Heart right ventricle (tissue), 16 donors: ENCODE measurements at regions of chr9 and their contacts with region 1.

Region 1: GRCh38 chr9:28970241-28970654 is 1397.0 kb upstream of the C9orf72 start:
- DNase-seq: no peak
- ATAC-seq: no peak
- H3K4me3 ChIP-seq: no peak overlapping the region
- H3K27ac ChIP-seq: no peak overlapping the region
- H3K4me1 ChIP-seq: no peaks in the 10 kb centered on the region
- H3K27me3 ChIP-seq: no peaks in the 10 kb centered on the region
- CTCF ChIP-seq: no peak

Region 2: GRCh38 chr9:28762167-28762566 is 208.1 kb before region 1 on chr9:
- intact Hi-C with region 1: no loop called
- DNase-seq: no peak
- ATAC-seq: no peak
- H3K4me3 ChIP-seq: no peak overlapping the region
- H3K27ac ChIP-seq: no peak overlapping the region
- H3K4me1 ChIP-seq: no peaks in the 10 kb centered on the region
- H3K27me3 ChIP-seq: no peaks in the 10 kb centered on the region
- CTCF ChIP-seq: no peak

Region 3: GRCh38 chr9:28915256-28915930 is 54.9 kb before region 1 on chr9:
- intact Hi-C with region 1: loop called in 1 of 10 experiments (anchors 10 kb)
- DNase-seq: no peak
- ATAC-seq: no peak
- H3K4me3 ChIP-seq: no peak overlapping the region
- H3K27ac ChIP-seq: no peak overlapping the region
- H3K4me1 ChIP-seq: no peaks in the 10 kb centered on the region
- H3K27me3 ChIP-seq: no peaks in the 10 kb centered on the region
- CTCF ChIP-seq: no peak